PC-9 (cell line): ENCODE measurements at regions of chr11 and their contacts with region 1.

Region 1: DNA sequence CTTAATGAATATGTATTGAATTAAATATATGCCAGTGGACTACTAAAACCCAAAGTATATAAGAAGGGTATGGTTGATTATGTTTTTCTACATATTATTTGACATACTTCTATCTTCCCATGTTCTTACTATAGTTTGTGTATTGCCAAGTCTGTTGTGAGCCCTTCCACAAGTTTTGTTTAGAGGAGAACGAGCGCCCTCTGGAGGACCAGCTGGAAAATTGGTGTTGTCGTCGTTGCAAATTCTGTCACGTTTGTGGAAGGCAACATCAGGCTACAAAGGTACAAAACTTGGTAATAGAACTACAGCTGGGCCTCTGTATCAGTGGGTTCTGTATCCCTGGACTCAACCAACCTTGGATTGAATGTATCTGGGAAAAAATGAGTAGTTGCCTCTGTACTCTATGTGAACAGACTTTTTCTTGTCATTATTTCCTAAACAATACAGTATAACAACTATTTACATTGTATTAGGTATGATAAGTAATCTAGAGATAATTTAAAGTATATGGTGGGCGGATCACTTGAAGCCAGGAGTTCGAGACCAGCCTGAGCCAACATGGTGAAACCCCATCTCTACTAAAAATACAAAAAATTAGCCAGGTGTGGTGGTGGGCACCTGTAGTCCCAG is 38.7 kb upstream of the TTC36 start:
- DNase-seq: peak; percentile 58 to 64
- H3K4me3 ChIP-seq: no peak overlapping the region
- H3K27ac ChIP-seq: no peak overlapping the region
- H3K4me1 ChIP-seq: no peaks in the 10 kb centered on the region
- H3K27me3 ChIP-seq: no peaks in the 10 kb centered on the region
- CTCF ChIP-seq: peak; percentile 97

Region 2: DNA sequence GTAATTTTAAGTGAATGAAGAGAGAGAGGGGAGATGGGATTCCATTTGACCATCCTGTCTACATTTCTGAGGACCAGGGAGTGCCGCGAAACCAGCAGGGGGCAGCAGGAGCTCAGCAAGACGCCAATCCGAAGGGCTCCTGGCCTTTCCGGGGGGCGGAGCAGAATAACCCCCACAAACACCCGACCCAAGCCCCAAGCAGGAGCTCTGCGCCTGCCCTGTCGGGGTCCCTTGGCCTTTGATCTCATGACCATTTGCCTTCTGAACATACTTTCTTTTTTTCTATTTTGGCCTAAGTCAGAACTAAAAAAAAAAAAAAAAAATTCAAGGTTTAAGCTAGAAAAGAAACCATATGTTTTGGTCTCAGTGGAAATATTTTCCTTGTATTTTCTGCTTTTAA is 290.2 kb before region 1 on chr11:
- CTCF ChIA-PET with region 1: no interaction called
- POLR2A ChIA-PET with region 1: no interaction called
- intact Hi-C with region 1: loop called (anchors 1 kb)
- DNase-seq: peak in 1 of 2 experiments; percentile 74
- H3K4me3 ChIP-seq: peak overlapping the region; percentile 44; the same call in 1 of the 2 replicates
- H3K27ac ChIP-seq: no peak overlapping the region
- H3K4me1 ChIP-seq: peaks cover 16% of the 10 kb centered on the region
- H3K27me3 ChIP-seq: no peaks in the 10 kb centered on the region
- CTCF ChIP-seq: peak; percentile 98

Region 3: DNA sequence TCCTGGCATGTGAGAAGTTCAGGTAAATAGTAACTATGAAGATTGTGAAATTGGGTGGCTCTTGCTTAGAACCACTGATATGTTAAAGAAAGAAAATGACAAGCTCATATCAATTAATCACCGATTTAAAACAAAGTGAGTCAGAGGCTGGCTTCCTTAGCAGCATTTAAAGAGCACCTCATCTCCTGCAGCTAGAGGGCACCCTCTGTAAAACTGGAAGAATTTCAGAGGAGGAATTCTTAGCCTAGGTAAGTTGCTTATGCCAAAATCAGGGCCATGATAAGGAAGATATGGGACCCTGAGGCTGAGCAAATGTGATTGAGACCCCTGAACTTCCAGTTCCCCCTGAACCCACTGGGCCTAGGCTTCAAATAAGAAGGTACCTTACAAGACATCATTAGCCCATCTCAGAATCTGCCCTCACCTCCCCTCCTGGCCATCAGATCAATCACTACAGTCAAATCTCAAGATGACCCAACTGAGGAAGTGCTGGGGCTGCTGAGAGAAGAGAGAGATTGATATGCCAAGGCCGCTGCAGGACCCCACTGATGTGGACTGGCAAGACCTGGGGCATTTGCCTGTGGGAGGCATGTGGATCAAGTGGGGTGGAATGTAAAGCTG is 192.7 kb before region 1 on chr11:
- CTCF ChIA-PET with region 1: no interaction called
- POLR2A ChIA-PET with region 1: no interaction called
- intact Hi-C with region 1: loop called (anchors 2 kb)
- DNase-seq: peak in 1 of 2 experiments; percentile 93
- H3K4me3 ChIP-seq: no peak overlapping the region
- H3K27ac ChIP-seq: no peak overlapping the region
- H3K4me1 ChIP-seq: peaks cover 11% of the 10 kb centered on the region
- H3K27me3 ChIP-seq: peaks cover 2% of the 10 kb centered on the region; the same call in 1 of the 2 replicates
- CTCF ChIP-seq: peak; percentile 87

Region 4: GRCh38 chr11:118401151-118401878 is 87.3 kb before region 1 on chr11 and contains the start of gene ATP5MG:
- CTCF ChIA-PET with region 1: no interaction called
- POLR2A ChIA-PET with region 1: no interaction called
- intact Hi-C with region 1: loop called (anchors 5 kb)
- DNase-seq: peak; percentile 81 to 82
- H3K4me3 ChIP-seq: peak within 1 kb of the TSS; percentile 83
- H3K27ac ChIP-seq: peak within 1 kb of the TSS; percentile 45
- H3K4me1 ChIP-seq: peaks cover 21% of the 10 kb centered on the region
- H3K27me3 ChIP-seq: no peaks in the 10 kb centered on the region
- CTCF ChIP-seq: no peak
- total RNA-seq, gene ATP5MG: 240 and 248 TPM in 2 replicates